Astrocyte of the cerebellum (primary cell): ENCODE measurements at regions of chr18 and their contacts with region 1.

Region 1: DNA sequence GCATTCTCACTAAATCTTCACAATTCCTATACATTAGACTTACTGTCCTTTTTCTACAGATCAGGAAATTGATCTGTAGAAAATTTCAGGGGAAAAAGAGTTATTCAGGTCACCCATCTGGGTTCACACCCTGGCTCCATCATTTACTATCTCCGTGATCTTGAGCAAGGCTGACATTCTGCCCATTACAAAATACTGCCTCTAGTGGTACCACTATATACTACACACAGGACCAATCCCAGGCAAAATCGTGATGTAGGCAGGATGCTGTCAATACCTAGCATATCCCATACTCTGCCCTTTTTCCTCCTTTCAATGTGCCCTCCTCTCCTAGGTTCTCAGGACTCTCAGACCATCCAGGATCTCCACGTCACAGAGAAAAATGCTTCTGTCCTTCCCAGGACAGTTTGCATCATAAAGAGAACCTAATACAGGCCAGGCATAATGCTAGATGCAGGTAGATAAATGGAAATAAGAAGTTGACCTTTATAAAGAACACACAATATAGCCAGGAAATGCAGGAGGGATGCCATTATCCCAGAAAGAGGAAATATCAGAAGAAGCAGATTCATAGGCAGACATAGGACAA is 101.9 kb downstream of the CDH20 start:
- DNase-seq: no peak
- H3K4me3 ChIP-seq: no peak overlapping the region
- CTCF ChIP-seq: peak; percentile 53

Region 2: GRCh38 chr18:61360404-61361383 is 74.5 kb before region 1 on chr18:
- in situ Hi-C with region 1: loop called (anchors 5 kb)
- DNase-seq: no peak
- H3K4me3 ChIP-seq: no peak overlapping the region
- CTCF ChIP-seq: no peak